Activated CD4-positive, alpha-beta T cell treated with anti-CD3 and anti-CD28 coated beads for 36 hours (primary cell): ENCODE measurements at regions of chr6 and their contacts with region 1.

Region 1: DNA sequence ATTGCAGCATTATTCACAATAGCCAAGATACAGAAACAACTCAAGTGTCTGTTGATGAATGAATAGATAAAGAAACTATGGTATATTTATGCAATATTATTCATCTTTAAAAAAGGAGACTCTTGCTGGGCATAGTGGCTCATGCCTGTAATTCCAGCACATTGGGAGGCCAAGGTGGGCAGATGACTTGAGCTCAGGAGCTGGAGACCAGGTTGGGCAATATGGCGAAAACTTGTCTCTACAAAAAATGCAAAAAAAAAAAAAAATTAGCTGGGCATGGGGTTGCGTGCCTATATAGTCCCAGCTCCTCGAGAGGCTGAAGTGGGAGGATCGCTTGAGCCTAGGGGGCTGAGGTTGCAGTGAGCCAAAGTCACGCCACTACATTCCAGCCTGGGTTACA is 119.8 kb downstream of the GJA1 start:
- DNase-seq: no peak
- ATAC-seq: no peak
- H3K4me3 Mint-ChIP-seq: no peak overlapping the region
- H3K27ac Mint-ChIP-seq: no peak overlapping the region
- H3K4me1 Mint-ChIP-seq: no peaks in the 10 kb centered on the region
- H3K27me3 Mint-ChIP-seq: no peaks in the 10 kb centered on the region

Region 2: DNA sequence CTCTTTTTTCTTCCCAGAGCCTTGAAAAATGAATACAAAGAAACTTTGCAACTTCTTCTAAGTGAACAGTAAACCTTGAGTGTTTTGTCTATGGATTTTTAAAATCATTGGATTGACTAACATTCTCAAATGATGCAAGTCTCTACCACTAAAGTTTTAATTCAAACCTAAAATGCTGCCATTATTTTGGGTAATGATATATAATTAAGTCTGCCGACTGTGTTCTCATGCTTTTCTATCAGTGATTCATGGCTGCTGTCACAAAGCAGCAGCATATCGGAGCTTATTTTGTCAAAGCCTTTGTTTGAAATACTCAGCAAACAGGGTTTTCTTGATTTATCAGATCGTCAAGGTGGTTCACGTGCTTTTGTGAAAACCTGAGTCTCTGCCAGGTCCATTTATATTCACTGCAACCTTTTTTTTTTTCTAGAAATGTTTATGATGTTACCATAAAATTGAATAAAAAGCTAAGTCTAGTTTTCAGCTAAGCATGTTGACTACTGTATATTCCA is 23.5 kb before region 1 on chr6:
- CTCF ChIA-PET with region 1: no interaction called
- POLR2A ChIA-PET with region 1: interaction called, 13 read pairs
- intact Hi-C with region 1: no loop called
- DNase-seq: no peak
- ATAC-seq: no peak
- H3K4me3 Mint-ChIP-seq: no peak overlapping the region
- H3K27ac Mint-ChIP-seq: no peak overlapping the region
- H3K4me1 Mint-ChIP-seq: no peaks in the 10 kb centered on the region
- H3K27me3 Mint-ChIP-seq: no peaks in the 10 kb centered on the region

Region 3: DNA sequence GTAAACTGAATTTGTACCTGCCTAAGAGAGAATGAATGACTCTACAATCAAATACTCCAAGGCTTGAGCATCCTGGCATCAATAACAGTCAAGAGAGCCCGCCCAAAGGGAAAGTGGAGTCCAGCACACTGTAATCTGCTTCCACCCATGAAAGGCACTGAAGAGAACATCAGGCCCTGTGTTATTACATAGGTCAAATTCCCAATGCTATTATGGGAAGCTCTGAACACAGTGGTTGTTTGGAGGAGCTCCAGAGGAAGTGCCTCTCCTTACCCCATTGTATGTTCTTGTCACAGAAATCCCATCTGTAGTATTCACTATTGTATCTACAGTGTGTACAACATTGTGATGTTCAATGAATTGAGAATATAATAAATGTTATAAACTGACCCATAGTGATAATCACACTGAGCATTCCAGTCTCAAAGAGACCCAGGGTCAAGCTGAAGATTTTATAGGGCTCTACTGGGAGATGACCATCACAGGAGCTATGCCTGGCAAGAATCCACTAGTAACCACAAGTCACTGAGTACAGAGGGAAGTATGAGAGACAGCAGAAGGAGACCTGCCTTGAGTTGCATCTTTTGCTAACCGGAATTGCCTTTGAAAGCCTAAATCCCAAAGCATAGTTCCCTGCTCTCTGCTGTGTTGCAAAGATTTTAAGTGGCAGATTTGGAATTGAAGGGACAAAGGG is 326.9 kb after region 1 on chr6:
- CTCF ChIA-PET with region 1: no interaction called
- POLR2A ChIA-PET with region 1: no interaction called
- intact Hi-C with region 1: no loop called
- DNase-seq: no peak
- ATAC-seq: no peak
- H3K4me3 Mint-ChIP-seq: no peak overlapping the region
- H3K27ac Mint-ChIP-seq: no peak overlapping the region
- H3K4me1 Mint-ChIP-seq: no peaks in the 10 kb centered on the region
- H3K27me3 Mint-ChIP-seq: no peaks in the 10 kb centered on the region